ENCODE measurements at regions of chr1 and their contacts with region 1.

Region 1: DNA sequence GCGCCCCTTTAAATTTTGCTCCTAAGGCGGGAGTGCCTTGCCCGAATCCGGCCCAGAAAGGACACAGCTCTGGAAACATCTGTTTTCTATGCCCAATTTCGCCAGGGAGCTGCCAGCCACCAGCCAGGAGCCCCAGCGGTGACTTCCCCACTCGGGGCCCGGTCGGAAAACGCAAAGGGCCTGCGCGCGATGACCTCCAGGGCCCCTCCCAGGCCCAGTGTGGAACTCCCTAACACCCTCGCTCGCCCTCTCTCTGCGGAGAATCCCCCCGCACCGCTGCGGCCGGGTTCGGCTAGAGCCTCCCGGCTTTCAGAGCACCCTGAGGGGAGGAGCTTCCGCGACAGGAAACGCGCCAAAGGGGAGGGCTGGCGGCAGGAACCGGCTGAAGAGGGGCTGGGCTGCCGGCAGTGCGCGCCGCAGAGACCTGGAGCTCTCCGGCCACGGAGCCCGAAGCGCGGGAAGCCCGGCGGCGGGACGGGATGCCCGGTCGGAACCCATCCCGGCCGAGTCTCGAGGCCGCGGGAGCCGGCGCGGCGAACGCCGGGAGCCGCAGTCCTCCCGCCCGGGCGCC is 505 bp downstream of the CLSPN start:
- DNase-seq: peak; percentile 93
- ATAC-seq: peak; percentile 87
- H3K4me3 Mint-ChIP-seq: peak overlapping the region; percentile 97
- H3K27ac Mint-ChIP-seq: peak overlapping the region; percentile 84
- H3K4me1 Mint-ChIP-seq: peaks cover 27% of the 10 kb centered on the region
- H3K27me3 Mint-ChIP-seq: no peaks in the 10 kb centered on the region

Region 2: DNA sequence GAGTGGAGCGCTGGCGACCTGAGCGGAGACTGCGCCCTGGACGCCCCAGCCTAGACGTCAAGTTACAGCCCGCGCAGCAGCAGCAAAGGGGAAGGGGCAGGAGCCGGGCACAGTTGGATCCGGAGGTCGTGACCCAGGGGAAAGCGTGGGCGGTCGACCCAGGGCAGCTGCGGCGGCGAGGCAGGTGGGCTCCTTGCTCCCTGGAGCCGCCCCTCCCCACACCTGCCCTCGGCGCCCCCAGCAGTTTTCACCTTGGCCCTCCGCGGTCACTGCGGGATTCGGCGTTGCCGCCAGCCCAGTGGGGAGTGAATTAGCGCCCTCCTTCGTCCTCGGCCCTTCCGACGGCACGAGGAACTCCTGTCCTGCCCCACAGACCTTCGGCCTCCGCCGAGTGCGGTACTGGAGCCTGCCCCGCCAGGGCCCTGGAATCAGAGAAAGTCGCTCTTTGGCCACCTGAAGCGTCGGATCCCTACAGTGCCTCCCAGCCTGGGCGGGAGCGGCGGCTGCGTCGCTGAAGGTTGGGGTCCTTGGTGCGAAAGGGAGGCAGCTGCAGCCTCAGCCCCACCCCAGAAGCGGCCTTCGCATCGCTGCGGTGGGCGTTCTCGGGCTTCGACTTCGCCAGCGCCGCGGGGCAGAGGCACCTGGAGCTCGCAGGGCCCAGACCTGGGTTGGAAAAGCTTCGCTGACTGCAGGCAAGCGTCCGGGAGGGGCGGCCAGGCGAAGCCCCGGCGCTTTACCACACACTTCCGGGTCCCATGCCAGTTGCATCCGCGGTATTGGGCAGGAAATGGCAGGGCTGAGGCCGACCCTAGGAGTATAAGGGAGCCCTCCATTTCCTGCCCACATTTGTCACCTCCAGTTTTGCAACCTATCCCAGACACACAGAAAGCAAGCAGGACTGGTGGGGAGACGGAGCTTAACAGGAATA is 191.9 kb before region 1 on chr1:
- CTCF ChIA-PET with region 1: interaction called, 3 read pairs
- POLR2A ChIA-PET with region 1: interaction called, 10 read pairs
- DNase-seq: peak; percentile 85
- ATAC-seq: peak; percentile 87
- H3K4me3 Mint-ChIP-seq: peak overlapping the region; percentile 81
- H3K27ac Mint-ChIP-seq: peak overlapping the region; percentile 94
- H3K4me1 Mint-ChIP-seq: peaks cover 34% of the 10 kb centered on the region
- H3K27me3 Mint-ChIP-seq: peaks cover 8% of the 10 kb centered on the region

Region 3: DNA sequence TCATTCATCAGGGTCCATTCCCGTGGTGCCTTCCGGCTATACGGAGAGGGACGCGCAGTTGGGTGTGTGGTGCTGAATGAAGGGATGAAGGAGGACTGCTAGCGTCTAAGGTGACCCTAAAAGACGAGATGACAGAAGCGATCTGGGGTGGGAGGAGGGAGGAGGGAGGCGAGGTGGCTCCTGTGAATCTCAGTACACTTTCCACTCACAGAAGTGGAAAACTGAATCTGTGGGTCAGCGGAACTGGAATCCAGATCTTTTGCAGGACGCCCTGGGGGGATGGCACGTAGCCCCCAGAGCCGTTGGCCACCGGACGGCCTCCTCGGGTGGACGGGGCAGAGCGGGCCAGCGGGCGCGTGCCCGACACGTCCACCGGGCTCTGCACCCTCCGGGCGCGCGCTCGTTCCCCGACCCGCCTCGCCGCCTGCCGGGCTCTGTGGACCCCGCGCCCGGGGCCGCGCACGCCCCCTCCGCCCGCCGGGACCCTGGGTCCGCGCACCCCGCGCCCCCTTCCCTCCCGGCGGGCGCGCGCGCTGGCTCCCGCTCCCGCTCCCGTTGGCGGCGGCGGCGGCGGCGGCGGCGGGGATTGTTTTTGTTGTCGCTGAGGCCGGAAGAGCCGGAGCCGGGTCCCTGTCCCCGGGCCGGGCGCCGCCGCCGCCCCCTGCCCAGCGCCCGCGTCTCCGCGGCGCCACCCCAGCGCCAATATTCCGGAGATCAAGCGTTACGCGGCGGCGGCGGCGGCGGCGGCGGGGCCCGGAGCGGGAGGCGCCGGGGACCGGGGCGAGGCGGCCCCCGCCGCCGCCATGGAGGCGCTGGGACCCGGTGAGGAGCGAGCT is 38.6 kb after region 1 on chr1 and contains the start of gene AGO4:
- CTCF ChIA-PET with region 1: no interaction called
- POLR2A ChIA-PET with region 1: interaction called, 13 read pairs
- DNase-seq: peak; percentile 34
- ATAC-seq: peak; percentile 60
- H3K4me3 Mint-ChIP-seq: peak within 1 kb of the TSS; percentile 82
- H3K27ac Mint-ChIP-seq: peak within 1 kb of the TSS; percentile 89
- H3K4me1 Mint-ChIP-seq: peaks cover 34% of the 10 kb centered on the region
- H3K27me3 Mint-ChIP-seq: peaks cover 3% of the 10 kb centered on the region
- total RNA-seq, gene AGO4: 7.9 to 8.5 TPM

Measured in activated CD8-positive, alpha-beta T cell treated with anti-CD3 and anti-CD28 coated beads, Interleukin-2, amount 10 ng/mL, durations not matched to agents 7 days and 5 days (primary cell).